Activated T-helper 2 cell treated with anti-CD3 and anti-CD28 coated beads, Interferon-gamma antibody, Interleukin-2, Interleukin-4, amounts not matched to agents 10 μg/mL and 5 μg/mL and 100 μg/mL, durations not matched to agents 14 hours and 24 hours and 36 hours (primary cell): ENCODE measurements at regions of chr3 and their contacts with region 1.

Region 1: DNA sequence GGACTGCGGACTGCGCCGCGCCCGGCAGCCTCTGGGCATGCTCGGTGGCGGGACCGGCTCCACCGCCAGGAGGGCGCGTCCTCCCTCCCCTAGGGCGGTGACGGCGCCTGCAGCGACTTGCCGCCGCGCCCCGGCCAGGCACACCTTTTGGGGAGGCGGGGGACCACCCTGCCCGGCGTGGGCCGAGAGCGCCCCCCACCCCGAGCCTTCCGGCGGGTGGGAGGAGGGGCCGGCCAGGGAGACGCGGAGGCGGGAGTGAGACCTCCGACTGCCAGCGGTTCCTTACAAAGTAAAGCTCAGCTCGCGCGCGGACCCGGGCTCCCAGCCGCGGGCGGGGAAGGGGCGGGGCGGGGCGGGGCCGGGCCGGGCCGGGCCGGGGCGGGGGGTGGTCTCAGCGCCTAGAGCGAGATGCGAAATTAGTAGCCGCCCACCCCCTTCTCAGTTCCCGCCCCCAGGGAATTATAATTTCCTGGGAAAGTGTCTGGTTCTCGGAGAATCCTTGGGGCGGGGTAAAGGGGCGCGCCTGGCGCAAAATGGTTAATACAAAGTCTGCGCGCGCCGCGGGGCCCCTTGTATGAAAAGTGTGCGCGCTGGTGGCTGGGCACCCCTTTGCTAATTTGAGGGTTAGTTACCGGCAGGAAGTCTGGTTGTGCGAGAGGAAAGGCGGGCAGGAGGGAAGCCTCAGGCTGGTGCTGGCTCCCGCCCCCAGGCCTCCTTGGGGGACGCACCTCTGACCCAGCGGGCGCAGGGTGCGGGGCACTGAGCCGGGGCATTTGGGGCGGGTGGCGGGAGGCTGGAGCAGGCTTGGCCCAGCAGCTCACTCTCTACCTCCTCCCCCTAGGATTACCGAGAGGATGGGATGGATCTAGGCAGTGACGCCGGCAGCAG is 224.8 kb upstream of the IL12A start:
- DNase-seq: peak; percentile 57
- H3K4me3 Mint-ChIP-seq: peak overlapping the region; percentile 88
- H3K27ac Mint-ChIP-seq: peak overlapping the region; percentile 84
- H3K4me1 Mint-ChIP-seq: peaks cover 16% of the 10 kb centered on the region
- H3K27me3 Mint-ChIP-seq: peaks cover 67% of the 10 kb centered on the region

Region 2: DNA sequence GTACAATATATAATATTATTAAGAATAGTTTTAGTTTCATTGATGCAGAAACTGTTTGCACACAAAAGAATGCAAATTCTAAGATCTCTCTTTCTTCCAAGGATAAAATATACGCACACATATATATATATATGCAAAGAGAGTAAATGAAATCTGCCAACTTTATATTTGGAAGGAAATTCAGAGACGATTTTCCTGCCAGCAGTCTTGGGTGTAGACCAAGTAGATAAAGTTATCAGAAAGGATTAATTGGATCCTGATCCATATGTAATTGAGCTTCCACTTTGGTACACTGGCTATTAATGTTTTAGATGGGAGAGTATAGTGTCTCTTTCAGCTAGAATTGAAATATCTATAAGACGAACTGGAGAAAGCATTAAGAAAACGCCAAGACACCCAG is 70.6 kb before region 1 on chr3:
- intact Hi-C with region 1: no loop called
- DNase-seq: no peak
- H3K4me3 Mint-ChIP-seq: no peak overlapping the region
- H3K27ac Mint-ChIP-seq: no peak overlapping the region
- H3K4me1 Mint-ChIP-seq: no peaks in the 10 kb centered on the region
- H3K27me3 Mint-ChIP-seq: no peaks in the 10 kb centered on the region

Region 3: GRCh38 chr3:159787191-159787590 is 23.3 kb after region 1 on chr3:
- intact Hi-C with region 1: loop called (anchors 2 kb)
- DNase-seq: no peak
- H3K4me3 Mint-ChIP-seq: no peak overlapping the region
- H3K27ac Mint-ChIP-seq: no peak overlapping the region
- H3K4me1 Mint-ChIP-seq: peaks cover 6% of the 10 kb centered on the region
- H3K27me3 Mint-ChIP-seq: peaks cover 13% of the 10 kb centered on the region

Region 4: DNA sequence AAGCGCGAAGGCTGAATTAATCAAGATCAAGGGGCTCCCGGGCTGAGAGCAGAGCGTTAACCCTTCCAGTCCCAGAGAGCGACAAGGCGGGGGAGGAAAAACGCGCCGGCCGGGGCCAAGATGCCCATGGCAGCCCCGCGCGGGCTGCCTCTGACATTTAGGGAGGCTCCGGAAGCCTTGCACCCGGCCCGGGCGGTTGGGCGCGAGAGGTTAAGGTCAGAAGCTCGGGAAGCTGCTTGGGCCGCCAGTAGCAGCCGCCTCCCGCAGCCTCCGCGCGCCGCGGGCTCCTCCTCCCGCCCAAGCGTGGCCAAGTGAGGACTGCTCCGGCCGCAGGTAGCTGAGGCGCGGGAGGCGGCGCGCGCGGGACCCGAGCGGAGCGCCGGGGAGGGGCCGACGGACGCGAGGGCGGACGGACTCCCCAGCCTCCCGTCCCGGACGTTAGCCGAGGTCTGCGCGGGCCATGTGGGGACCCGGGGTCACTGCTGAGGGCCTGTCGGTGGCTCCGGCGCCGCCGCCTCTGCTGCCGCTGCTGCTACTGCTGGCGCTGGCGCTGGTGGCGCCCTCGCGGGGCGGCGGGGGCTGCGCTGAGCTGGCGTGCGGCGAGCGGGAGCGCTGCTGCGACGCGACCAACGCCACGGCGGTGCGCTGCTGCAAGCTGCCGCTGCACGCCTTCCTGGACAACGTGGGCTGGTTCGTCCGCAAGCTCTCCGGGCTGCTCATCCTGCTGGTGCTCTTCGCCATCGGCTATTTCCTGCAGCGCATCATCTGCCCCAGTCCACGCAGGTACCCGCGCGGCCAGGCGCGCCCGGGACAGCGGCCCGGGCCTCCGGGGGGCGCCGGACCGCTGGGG is 461.6 kb after region 1 on chr3 and contains the start of gene C3orf80:
- intact Hi-C with region 1: loop called (anchors 10 kb)
- DNase-seq: peak; percentile 38
- H3K4me3 Mint-ChIP-seq: peak within 1 kb of the TSS; percentile 81
- H3K27ac Mint-ChIP-seq: no peak within 1 kb of the TSS
- H3K4me1 Mint-ChIP-seq: peaks cover 15% of the 10 kb centered on the region
- H3K27me3 Mint-ChIP-seq: peaks cover 67% of the 10 kb centered on the region
- total RNA-seq, gene C3orf80: 0.25 and 0.30 TPM in 2 replicates